CD4-positive, alpha-beta memory T cell (primary cell): ENCODE measurements at regions of chr10 and their contacts with region 1.

Region 1: GRCh38 chr10:72048450-72049124 is 39.8 kb downstream of the SPOCK2 start:
- DNase-seq: peak; percentile 81 to 84 (median 81)
- H3K4me3 ChIP-seq: no peak overlapping the region
- H3K4me3 Mint-ChIP-seq: no peak overlapping the region
- H3K27ac ChIP-seq: no peak overlapping the region
- H3K27ac Mint-ChIP-seq: peak overlapping the region in 3 of 7 donors; percentile 20 to 78 (median 70)
- H3K4me1 ChIP-seq: no peaks in the 10 kb centered on the region
- H3K4me1 Mint-ChIP-seq: peaks cover 1 to 8% (median 6%) of the 10 kb centered on the region in 4 donors
- H3K27me3 ChIP-seq: no peaks in the 10 kb centered on the region
- H3K27me3 Mint-ChIP-seq: no peaks in the 10 kb centered on the region

Region 2: DNA sequence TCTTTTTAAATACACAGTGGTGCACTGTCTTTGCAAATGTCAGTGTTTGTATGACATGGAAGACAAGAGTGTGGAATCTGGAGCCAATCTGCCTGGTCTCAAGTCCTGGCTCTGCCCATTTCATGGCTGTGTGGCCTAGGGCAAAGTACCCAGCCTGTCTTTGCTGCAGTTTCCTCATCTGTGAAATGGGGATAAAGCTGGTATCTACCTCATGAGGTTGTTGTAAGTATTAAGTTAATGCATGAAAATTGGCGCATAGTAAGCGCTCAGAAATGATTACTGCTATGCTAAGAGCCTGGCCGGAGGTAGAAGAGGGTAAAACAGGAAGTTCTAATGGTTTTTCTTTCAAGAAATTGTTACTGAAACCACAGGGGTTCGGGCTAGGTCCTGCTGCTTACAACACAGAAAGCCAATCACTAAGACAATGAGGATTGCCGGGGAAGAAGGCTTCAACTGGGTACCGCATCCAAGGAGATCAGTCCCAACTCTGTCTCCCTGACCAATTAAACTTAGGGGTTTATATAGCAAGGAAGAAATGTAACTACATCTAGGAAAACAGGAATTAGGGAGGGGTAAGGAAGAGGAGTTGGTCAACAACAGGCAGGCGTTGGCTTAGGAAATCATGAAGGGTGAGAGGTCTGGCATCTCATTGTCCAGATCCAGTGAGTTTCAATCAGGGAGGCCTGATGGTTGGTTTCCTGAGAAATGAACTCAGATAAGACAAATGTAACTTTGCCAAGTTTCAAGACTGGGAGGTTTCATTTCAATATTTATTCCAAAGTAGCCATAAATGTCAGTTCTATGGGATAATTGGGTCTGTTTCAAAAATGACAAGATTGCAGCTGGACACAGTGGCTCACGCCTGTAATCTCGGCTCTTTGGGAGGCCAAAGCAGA is 27.4 kb before region 1 on chr10:
- CTCF ChIA-PET with region 1: no interaction called
- POLR2A ChIA-PET with region 1: no interaction called
- intact Hi-C with region 1: no loop called
- DNase-seq: no peak
- H3K4me3 ChIP-seq: no peak overlapping the region
- H3K4me3 Mint-ChIP-seq: no peak overlapping the region
- H3K27ac ChIP-seq: no peak overlapping the region
- H3K27ac Mint-ChIP-seq: no peak overlapping the region
- H3K4me1 ChIP-seq: no peaks in the 10 kb centered on the region
- H3K4me1 Mint-ChIP-seq: peaks cover 0 to 5% (median 2%) of the 10 kb centered on the region in 4 donors
- H3K27me3 ChIP-seq: no peaks in the 10 kb centered on the region
- H3K27me3 Mint-ChIP-seq: peaks cover 4 to 11% of the 10 kb centered on the region in 2 donors

Region 3: DNA sequence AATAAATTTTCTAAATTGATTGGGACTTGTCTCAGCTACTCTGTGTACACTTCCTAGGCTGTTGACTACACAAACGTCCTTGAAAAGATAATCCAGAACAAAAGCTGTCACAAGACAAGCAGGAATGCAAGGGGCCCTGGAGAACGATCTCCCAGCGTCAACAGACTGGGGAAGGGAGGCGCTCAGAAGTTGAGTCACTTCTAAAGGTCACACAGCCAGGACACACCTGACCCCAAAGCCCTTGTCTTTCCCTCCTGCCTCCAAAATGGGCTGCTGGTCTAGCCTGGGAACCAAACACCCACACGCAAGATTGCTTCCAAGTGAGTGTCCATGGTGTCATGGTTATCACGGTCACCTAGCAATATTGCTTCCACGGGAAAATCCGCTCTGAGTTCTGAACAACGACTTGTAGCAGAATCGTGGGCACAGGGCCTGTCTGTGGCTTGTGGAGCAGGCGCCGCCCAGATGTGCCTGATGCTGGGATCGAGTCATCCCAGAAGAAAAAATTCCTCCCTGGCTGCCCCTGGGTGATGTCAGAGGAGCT is 10.1 kb before region 1 on chr10:
- CTCF ChIA-PET with region 1: interaction called, 28 read pairs
- POLR2A ChIA-PET with region 1: no interaction called
- intact Hi-C with region 1: no loop called
- DNase-seq: no peak
- H3K4me3 ChIP-seq: no peak overlapping the region
- H3K4me3 Mint-ChIP-seq: no peak overlapping the region
- H3K27ac ChIP-seq: no peak overlapping the region
- H3K27ac Mint-ChIP-seq: no peak overlapping the region
- H3K4me1 ChIP-seq: no peaks in the 10 kb centered on the region
- H3K4me1 Mint-ChIP-seq: no peaks in the 10 kb centered on the region
- H3K27me3 ChIP-seq: no peaks in the 10 kb centered on the region
- H3K27me3 Mint-ChIP-seq: peaks cover 0 to 3% of the 10 kb centered on the region in 2 donors

Region 4: GRCh38 chr10:72069751-72070526 is 21.4 kb after region 1 on chr10:
- CTCF ChIA-PET with region 1: interaction called, 30 read pairs
- POLR2A ChIA-PET with region 1: interaction called, 83 read pairs
- intact Hi-C with region 1: no loop called
- DNase-seq: no peak
- H3K4me3 ChIP-seq: no peak overlapping the region
- H3K4me3 Mint-ChIP-seq: peak overlapping the region in 2 of 8 donors; percentile 9 to 12
- H3K27ac ChIP-seq: no peak overlapping the region
- H3K27ac Mint-ChIP-seq: peak overlapping the region; percentile 39 to 97 (median 91)
- H3K4me1 ChIP-seq: peaks cover 37% of the 10 kb centered on the region
- H3K4me1 Mint-ChIP-seq: peaks cover 12 to 42% (median 28%) of the 10 kb centered on the region in 4 donors
- H3K27me3 ChIP-seq: no peaks in the 10 kb centered on the region
- H3K27me3 Mint-ChIP-seq: no peaks in the 10 kb centered on the region

Region 5: GRCh38 chr10:72097448-72098300 is 49.1 kb after region 1 on chr10:
- CTCF ChIA-PET with region 1: interaction called, 10 read pairs
- POLR2A ChIA-PET with region 1: no interaction called
- intact Hi-C with region 1: no loop called
- DNase-seq: no peak
- H3K4me3 ChIP-seq: no peak overlapping the region
- H3K4me3 Mint-ChIP-seq: no peak overlapping the region
- H3K27ac ChIP-seq: no peak overlapping the region
- H3K27ac Mint-ChIP-seq: no peak overlapping the region
- H3K4me1 ChIP-seq: peaks cover 7% of the 10 kb centered on the region
- H3K4me1 Mint-ChIP-seq: peaks cover 23 to 35% (median 27%) of the 10 kb centered on the region in 4 donors
- H3K27me3 ChIP-seq: no peaks in the 10 kb centered on the region
- H3K27me3 Mint-ChIP-seq: no peaks in the 10 kb centered on the region

Region 6: GRCh38 chr10:72173635-72174296 is 125.2 kb after region 1 on chr10:
- CTCF ChIA-PET with region 1: interaction called, 13 read pairs
- POLR2A ChIA-PET with region 1: no interaction called
- intact Hi-C with region 1: no loop called
- DNase-seq: no peak
- H3K4me3 ChIP-seq: no peak overlapping the region
- H3K4me3 Mint-ChIP-seq: no peak overlapping the region
- H3K27ac ChIP-seq: no peak overlapping the region
- H3K27ac Mint-ChIP-seq: peak overlapping the region in 1 of 7 donors; percentile 16
- H3K4me1 ChIP-seq: no peaks in the 10 kb centered on the region
- H3K4me1 Mint-ChIP-seq: peaks cover 0 to 9% (median 3%) of the 10 kb centered on the region in 4 donors
- H3K27me3 ChIP-seq: no peaks in the 10 kb centered on the region
- H3K27me3 Mint-ChIP-seq: no peaks in the 10 kb centered on the region

Region 7: GRCh38 chr10:73003822-73004221 is 955.2 kb after region 1 on chr10:
- CTCF ChIA-PET with region 1: no interaction called
- POLR2A ChIA-PET with region 1: no interaction called
- intact Hi-C with region 1: no loop called
- DNase-seq: no peak
- H3K4me3 ChIP-seq: no peak overlapping the region
- H3K4me3 Mint-ChIP-seq: no peak overlapping the region
- H3K27ac ChIP-seq: no peak overlapping the region
- H3K27ac Mint-ChIP-seq: no peak overlapping the region
- H3K4me1 ChIP-seq: no peaks in the 10 kb centered on the region
- H3K4me1 Mint-ChIP-seq: no peaks in the 10 kb centered on the region
- H3K27me3 ChIP-seq: no peaks in the 10 kb centered on the region
- H3K27me3 Mint-ChIP-seq: peaks cover 0 to 1% of the 10 kb centered on the region in 2 donors